PC-3 (cell line): ENCODE measurements at regions of chr2 and their contacts with region 1.

Region 1: DNA sequence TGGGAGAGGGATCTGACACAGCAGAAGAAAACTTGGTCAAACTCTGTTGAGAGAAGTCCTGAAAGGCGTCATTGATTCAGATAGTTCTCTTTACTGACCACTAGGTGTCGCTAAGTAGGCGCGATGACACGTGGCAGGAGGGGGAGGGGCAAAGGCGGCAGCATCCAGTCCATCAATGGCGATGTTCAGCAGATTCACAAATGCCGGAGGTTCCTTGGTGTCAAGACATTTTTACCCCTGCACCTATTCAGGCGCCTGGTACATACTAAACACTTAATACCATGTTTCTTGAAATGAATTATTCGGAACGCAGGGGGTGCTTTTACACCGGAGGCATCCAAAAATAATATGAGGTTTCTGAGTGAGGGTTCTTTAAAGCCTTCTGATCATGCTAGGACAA is 3.0 kb upstream of the PLEK start:
- DNase-seq: peak; percentile 80
- ATAC-seq: peak; percentile 73
- H3K4me3 ChIP-seq: no peak overlapping the region; the same call in 1 of the 2 replicates
- H3K27ac ChIP-seq: no peak overlapping the region
- H3K4me1 ChIP-seq: peaks cover 4% of the 10 kb centered on the region; the same call in 1 of the 2 replicates
- H3K27me3 ChIP-seq: no peaks in the 10 kb centered on the region
- CTCF ChIP-seq: peak; percentile 91

Region 2: DNA sequence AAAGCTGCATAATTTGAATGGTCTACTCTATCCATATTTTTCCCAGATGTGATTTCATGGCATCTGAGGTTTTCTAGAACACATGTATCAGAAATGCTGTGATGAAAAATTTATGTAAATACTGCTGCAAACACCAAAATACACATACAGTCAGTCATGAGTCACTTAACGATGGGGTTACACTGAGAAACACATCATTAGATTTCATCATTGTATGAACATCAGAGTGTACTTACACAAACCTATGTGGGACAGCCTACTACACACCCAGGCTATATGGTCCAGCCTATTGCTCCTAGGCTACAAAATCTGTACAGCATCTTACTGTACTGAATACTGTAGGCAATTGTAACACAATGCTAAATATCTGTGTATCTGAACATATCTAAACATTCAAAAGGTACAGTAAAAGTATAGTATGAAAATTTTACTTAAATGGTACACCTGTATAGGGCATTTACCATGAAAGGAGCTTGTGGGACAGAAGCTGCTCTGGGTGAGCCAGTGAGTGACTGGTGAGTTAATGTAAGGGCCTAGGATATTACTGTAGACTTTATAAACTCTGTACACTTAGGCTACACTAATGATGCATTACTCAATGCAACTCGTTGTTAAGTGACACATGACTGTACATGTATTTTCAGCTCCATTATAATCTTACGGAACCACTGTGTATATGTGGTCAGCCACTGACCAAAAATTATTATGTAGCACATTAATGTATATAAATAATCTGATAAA is 170.9 kb before region 1 on chr2:
- CTCF ChIA-PET with region 1: no interaction called
- POLR2A ChIA-PET with region 1: no interaction called
- intact Hi-C with region 1: loop called (anchors 5 kb)
- DNase-seq: peak; percentile 90
- ATAC-seq: peak; percentile 97
- H3K4me3 ChIP-seq: no peak overlapping the region
- H3K27ac ChIP-seq: peak overlapping the region; percentile 63
- H3K4me1 ChIP-seq: peaks cover 53% of the 10 kb centered on the region
- H3K27me3 ChIP-seq: no peaks in the 10 kb centered on the region
- CTCF ChIP-seq: no peak

Region 3: DNA sequence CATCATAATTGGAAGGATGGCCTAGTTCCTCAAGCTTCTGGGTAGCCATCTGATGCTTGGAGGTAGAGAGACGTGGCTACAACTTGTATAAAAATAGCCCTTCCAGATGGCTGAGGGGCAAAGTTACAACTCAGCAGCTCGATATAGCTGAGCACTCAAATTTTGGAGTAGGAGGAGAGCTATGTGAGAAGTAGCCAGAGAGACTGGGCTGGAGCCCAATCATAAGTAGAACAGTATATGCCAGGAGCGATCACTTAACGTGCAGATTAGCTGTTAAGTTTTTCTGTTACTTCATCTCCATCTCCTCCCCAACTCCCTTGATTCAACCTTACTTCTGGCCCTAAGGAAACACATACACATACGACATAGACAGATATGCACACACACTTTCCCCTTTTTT is 71.2 kb before region 1 on chr2:
- CTCF ChIA-PET with region 1: interaction called, 15 read pairs
- POLR2A ChIA-PET with region 1: no interaction called
- intact Hi-C with region 1: loop called (anchors 1 kb)
- DNase-seq: no peak
- ATAC-seq: no peak
- H3K4me3 ChIP-seq: no peak overlapping the region
- H3K27ac ChIP-seq: no peak overlapping the region
- H3K4me1 ChIP-seq: no peaks in the 10 kb centered on the region; the same call in 1 of the 2 replicates
- H3K27me3 ChIP-seq: no peaks in the 10 kb centered on the region
- CTCF ChIP-seq: no peak

Region 4: GRCh38 chr2:68336192-68336591 is 25.9 kb before region 1 on chr2:
- CTCF ChIA-PET with region 1: no interaction called
- POLR2A ChIA-PET with region 1: no interaction called
- intact Hi-C with region 1: loop called (anchors 2 kb)
- DNase-seq: peak; percentile 98
- ATAC-seq: peak; percentile 89
- H3K4me3 ChIP-seq: peak overlapping the region; percentile 26; the same call in 1 of the 2 replicates
- H3K27ac ChIP-seq: peak overlapping the region; percentile 63
- H3K4me1 ChIP-seq: peaks cover 33% of the 10 kb centered on the region
- H3K27me3 ChIP-seq: no peaks in the 10 kb centered on the region
- CTCF ChIP-seq: no peak

Region 5: GRCh38 chr2:68441179-68441993 is 79.3 kb after region 1 on chr2:
- CTCF ChIA-PET with region 1: interaction called, 9 read pairs
- POLR2A ChIA-PET with region 1: no interaction called
- intact Hi-C with region 1: loop called (anchors 1 kb)
- DNase-seq: peak; percentile 91
- ATAC-seq: peak; percentile 96
- H3K4me3 ChIP-seq: no peak overlapping the region
- H3K27ac ChIP-seq: no peak overlapping the region
- H3K4me1 ChIP-seq: no peaks in the 10 kb centered on the region
- H3K27me3 ChIP-seq: no peaks in the 10 kb centered on the region
- CTCF ChIP-seq: peak; percentile 95

Region 6: GRCh38 chr2:68472796-68473414 is 110.8 kb after region 1 on chr2:
- CTCF ChIA-PET with region 1: no interaction called
- POLR2A ChIA-PET with region 1: no interaction called
- intact Hi-C with region 1: no loop called
- DNase-seq: no peak
- ATAC-seq: no peak
- H3K4me3 ChIP-seq: no peak overlapping the region
- H3K27ac ChIP-seq: no peak overlapping the region
- H3K4me1 ChIP-seq: peaks cover 17% of the 10 kb centered on the region
- H3K27me3 ChIP-seq: no peaks in the 10 kb centered on the region
- CTCF ChIP-seq: no peak